ENCODE measurements at regions of chr10 and their contacts with region 1.

Region 1: GRCh38 chr10:60717852-60718251 is 60.4 kb upstream of the CDK1 start:
- DNase-seq: no peak
- H3K4me3 Mint-ChIP-seq: no peak overlapping the region
- H3K27ac Mint-ChIP-seq: no peak overlapping the region
- H3K4me1 Mint-ChIP-seq: peaks cover 6% of the 10 kb centered on the region
- H3K27me3 Mint-ChIP-seq: no peaks in the 10 kb centered on the region
- CTCF ChIP-seq: no peak

Region 2: DNA sequence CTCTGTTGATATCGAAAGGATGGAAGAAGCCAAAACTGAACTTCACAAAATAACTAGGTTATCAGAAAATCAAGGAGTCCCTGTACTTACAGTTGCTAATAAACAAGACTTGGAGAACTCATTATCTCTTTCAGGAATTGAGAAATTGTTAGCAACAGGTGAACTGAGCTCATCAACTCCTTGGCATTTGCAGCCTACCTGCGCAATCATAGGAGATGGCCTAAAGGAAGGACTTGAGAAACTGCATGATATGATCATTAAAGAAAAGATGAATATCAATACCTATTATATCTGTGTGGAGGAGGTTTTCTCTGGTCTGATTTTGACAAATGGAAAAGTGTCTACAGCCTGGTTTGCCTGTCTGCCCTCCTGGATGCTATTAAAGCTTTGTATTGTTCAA is 33.0 kb before region 1 on chr10:
- CTCF ChIA-PET with region 1: no interaction called
- POLR2A ChIA-PET with region 1: no interaction called
- intact Hi-C with region 1: no loop called
- DNase-seq: no peak
- H3K4me3 Mint-ChIP-seq: no peak overlapping the region
- H3K27ac Mint-ChIP-seq: no peak overlapping the region
- H3K4me1 Mint-ChIP-seq: no peaks in the 10 kb centered on the region
- H3K27me3 Mint-ChIP-seq: no peaks in the 10 kb centered on the region
- CTCF ChIP-seq: no peak

Region 3: DNA sequence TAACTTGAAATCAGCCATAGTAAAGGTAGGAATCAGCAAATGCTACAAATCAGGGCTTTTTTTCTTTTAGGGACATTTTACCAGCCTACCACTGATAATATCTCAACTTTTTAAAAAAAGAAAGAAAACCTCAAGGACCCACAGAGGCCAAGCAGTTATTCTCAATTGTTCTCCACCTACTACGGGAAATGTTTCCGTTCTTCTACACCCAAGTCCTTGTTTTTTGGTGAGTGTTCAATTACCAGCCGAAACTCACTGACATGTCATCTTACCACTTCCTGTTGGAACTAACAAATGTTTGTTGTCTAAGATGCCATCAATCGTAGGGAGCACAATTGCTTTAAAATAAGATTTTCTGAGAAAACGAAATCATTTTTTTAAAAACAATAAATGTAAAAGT is 10.2 kb after region 1 on chr10:
- CTCF ChIA-PET with region 1: interaction called, 4 read pairs
- POLR2A ChIA-PET with region 1: interaction called, 11 read pairs
- intact Hi-C with region 1: no loop called
- DNase-seq: peak; percentile 15
- H3K4me3 Mint-ChIP-seq: no peak overlapping the region
- H3K27ac Mint-ChIP-seq: no peak overlapping the region
- H3K4me1 Mint-ChIP-seq: peaks cover 28% of the 10 kb centered on the region
- H3K27me3 Mint-ChIP-seq: no peaks in the 10 kb centered on the region
- CTCF ChIP-seq: no peak

Measured in MCF 10A (cell line).